ENCODE measurements at regions of chr5 and their contacts with region 1.

Region 1: DNA sequence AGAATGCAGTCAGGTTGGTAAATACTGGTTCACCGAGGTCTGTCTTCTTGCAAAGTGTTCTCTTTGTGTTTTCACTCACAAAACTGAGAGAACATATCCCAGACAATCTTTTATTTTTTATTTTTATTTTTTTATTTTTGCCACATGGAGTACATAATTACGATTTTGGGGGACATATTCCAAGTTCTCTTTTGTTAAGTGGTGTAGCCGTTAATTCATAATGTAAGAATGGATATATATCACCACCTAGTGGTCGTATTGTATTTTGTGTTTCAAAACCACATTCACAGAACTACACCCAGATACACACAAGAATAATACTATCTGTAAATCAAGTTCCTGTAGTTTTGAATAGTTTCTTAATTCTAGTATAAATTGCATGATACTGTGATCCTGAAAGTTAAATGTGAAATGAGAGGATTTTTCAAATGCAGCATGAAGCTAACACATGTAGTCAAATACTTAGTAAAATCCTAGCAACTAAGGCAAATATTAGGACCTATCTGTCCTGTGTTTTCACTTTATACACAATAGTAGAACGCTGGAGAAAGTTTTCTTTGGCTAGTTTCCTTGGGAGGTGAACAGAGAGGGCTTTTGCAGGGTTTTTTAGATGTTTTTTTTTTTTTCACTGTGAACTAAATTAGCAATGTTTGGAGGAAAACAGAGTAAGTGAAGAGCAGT is 92.7 kb downstream of the VCAN start:
- DNase-seq: no peak
- H3K4me3 ChIP-seq: no peak overlapping the region
- CTCF ChIP-seq: peak; percentile 10

Region 2: GRCh38 chr5:83115451-83116215 is 448.6 kb before region 1 on chr5:
- CTCF ChIA-PET with region 1: no interaction called
- POLR2A ChIA-PET with region 1: no interaction called
- DNase-seq: no peak
- H3K4me3 ChIP-seq: no peak overlapping the region
- CTCF ChIP-seq: no peak

Region 3: GRCh38 chr5:83474164-83474796 is 89.9 kb before region 1 on chr5:
- CTCF ChIA-PET with region 1: interaction called, 11 read pairs
- POLR2A ChIA-PET with region 1: no interaction called
- DNase-seq: no peak
- H3K4me3 ChIP-seq: peak overlapping the region; percentile 82
- CTCF ChIP-seq: no peak

Region 4: DNA sequence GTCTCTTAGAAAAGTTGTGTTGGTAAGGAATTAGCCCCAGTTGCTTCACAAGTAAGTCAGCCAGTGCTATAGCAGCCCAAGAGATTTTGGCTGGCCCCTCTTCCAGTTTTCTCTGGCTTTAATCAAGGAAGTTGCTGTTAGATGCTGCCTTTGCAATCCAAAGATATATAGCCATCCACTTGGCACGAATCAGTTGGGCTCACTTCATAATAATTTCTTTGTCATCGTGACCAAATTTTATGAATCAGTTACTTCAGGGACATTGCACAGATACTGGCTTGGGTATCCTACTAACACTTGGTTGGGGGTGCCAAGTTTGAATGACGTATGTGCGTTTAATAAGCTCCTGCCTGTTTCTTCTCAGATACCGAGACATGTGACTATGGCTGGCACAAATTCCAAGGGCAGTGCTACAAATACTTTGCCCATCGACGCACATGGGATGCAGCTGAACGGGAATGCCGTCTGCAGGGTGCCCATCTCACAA is 11.2 kb before region 1 on chr5:
- CTCF ChIA-PET with region 1: interaction called, 13 read pairs
- POLR2A ChIA-PET with region 1: no interaction called
- DNase-seq: no peak
- H3K4me3 ChIP-seq: no peak overlapping the region
- CTCF ChIP-seq: no peak